ENCODE measurements at regions of chr7 and their contacts with region 1.

Region 1: GRCh38 chr7:69184339-69184738 is 413.9 kb upstream of the AUTS2 start:
- DNase-seq: no peak
- ATAC-seq: no peak
- H3K4me3 Mint-ChIP-seq: peak overlapping the region; percentile 76
- H3K27ac Mint-ChIP-seq: peak overlapping the region; percentile 61
- H3K4me1 Mint-ChIP-seq: peaks cover 47% of the 10 kb centered on the region
- H3K27me3 Mint-ChIP-seq: no peaks in the 10 kb centered on the region
- CTCF ChIP-seq: no peak

Region 2: GRCh38 chr7:69047151-69047754 is 137.1 kb before region 1 on chr7:
- CTCF ChIA-PET with region 1: no interaction called
- POLR2A ChIA-PET with region 1: no interaction called
- intact Hi-C with region 1: no loop called
- DNase-seq: no peak
- ATAC-seq: no peak
- H3K4me3 Mint-ChIP-seq: no peak overlapping the region
- H3K27ac Mint-ChIP-seq: no peak overlapping the region
- H3K4me1 Mint-ChIP-seq: no peaks in the 10 kb centered on the region
- H3K27me3 Mint-ChIP-seq: no peaks in the 10 kb centered on the region
- CTCF ChIP-seq: no peak

Region 3: GRCh38 chr7:69095649-69096048 is 88.7 kb before region 1 on chr7:
- CTCF ChIA-PET with region 1: no interaction called
- POLR2A ChIA-PET with region 1: no interaction called
- intact Hi-C with region 1: no loop called
- DNase-seq: no peak
- ATAC-seq: no peak
- H3K4me3 Mint-ChIP-seq: no peak overlapping the region
- H3K27ac Mint-ChIP-seq: no peak overlapping the region
- H3K4me1 Mint-ChIP-seq: no peaks in the 10 kb centered on the region
- H3K27me3 Mint-ChIP-seq: no peaks in the 10 kb centered on the region
- CTCF ChIP-seq: no peak

Region 4: GRCh38 chr7:69208848-69209247 is 24.5 kb after region 1 on chr7:
- CTCF ChIA-PET with region 1: no interaction called
- POLR2A ChIA-PET with region 1: interaction called, 4 read pairs
- intact Hi-C with region 1: loop called (anchors 1 kb)
- DNase-seq: no peak
- ATAC-seq: peak; percentile 91
- H3K4me3 Mint-ChIP-seq: peak overlapping the region; percentile 38
- H3K27ac Mint-ChIP-seq: no peak overlapping the region
- H3K4me1 Mint-ChIP-seq: peaks cover 21% of the 10 kb centered on the region
- H3K27me3 Mint-ChIP-seq: no peaks in the 10 kb centered on the region
- CTCF ChIP-seq: no peak